PC-3 (cell line): ENCODE measurements at regions of chr16 and their contacts with region 1.

Region 1: DNA sequence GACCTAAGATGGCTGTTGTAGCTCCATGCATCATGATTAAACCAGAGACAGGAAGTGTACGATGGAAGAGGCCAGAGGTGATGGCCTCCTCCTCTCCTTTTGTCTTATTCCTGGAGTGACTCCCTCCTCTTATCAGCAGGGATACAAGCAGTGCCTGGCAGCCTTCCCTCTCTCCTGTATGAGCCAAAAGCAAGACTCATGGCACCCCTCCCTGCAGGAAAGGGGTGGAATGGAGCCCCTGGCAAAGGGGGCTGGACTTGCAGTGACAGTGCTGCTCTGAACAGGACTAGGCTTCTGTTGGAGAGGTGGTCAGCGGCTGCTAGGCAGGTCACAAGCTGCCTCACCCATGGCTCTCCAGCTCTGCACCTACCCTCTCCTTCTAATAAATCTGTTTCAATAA is 8.4 kb downstream of the TXNL4B start:
- DNase-seq: no peak
- ATAC-seq: no peak
- H3K4me3 ChIP-seq: no peak overlapping the region
- H3K27ac ChIP-seq: no peak overlapping the region
- H3K4me1 ChIP-seq: no peaks in the 10 kb centered on the region
- H3K27me3 ChIP-seq: no peaks in the 10 kb centered on the region
- CTCF ChIP-seq: no peak

Region 2: GRCh38 chr16:72162105-72162692 is 77.2 kb after region 1 on chr16:
- CTCF ChIA-PET with region 1: no interaction called
- POLR2A ChIA-PET with region 1: interaction called, 28 read pairs
- intact Hi-C with region 1: no loop called
- DNase-seq: no peak
- ATAC-seq: no peak
- H3K4me3 ChIP-seq: no peak overlapping the region
- H3K27ac ChIP-seq: no peak overlapping the region
- H3K4me1 ChIP-seq: no peaks in the 10 kb centered on the region
- H3K27me3 ChIP-seq: no peaks in the 10 kb centered on the region
- CTCF ChIP-seq: no peak